ENCODE measurements at regions of chr17 and their contacts with region 1.

Region 1: DNA sequence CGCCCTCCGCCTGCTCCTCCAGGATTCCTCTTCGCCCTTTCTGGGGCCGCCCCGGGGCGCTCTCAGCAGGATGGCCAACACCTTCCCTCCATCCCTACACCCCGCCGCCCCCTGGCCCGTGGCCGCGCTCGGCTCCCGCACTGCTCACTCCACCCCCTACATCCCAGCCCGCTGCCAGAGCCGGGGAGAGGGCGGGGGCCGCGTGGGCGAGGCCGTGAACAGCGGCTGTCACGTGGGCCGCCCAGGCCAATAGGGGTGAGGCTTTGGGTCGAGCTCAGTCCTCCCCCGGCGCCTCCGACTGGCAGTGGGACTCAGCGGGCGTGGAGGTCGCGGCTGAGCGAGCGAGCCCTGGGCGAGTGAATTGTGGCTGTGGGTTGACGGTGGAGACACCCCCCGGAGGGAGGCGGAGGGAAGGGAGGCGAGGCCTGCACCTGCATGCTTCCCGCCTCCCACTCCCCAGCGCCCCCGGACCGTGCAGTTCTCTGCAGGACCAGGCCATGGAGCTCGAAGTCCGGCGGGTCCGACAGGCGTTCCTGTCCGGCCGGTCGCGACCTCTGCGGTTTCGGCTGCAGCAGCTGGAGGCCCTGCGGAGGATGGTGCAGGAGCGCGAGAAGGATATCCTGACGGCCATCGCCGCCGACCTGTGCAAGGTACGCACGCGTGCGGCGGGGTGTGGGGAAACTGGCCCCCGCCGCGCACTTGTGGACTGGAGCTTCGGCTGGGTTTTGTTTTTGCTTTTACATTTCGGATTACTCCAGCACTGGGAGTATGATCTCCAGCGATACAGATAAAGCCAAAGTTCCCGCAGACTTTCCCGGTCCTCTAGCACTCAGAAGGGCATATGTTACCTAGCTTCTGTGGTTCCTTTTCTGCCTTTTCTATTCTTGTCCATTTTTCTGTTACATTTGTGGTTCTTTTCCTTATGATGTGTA is at the start of gene ALDH3A2:
- DNase-seq: peak; percentile 93
- ATAC-seq: peak; percentile 96
- H3K4me3 Mint-ChIP-seq: peak within 1 kb of the TSS; percentile 93
- H3K27ac Mint-ChIP-seq: peak within 1 kb of the TSS; percentile 89
- H3K4me1 Mint-ChIP-seq: peaks cover 36% of the 10 kb centered on the region
- H3K27me3 Mint-ChIP-seq: peaks cover 8% of the 10 kb centered on the region
- total RNA-seq, gene ALDH3A2: 29.1 to 32.8 TPM

Region 2: DNA sequence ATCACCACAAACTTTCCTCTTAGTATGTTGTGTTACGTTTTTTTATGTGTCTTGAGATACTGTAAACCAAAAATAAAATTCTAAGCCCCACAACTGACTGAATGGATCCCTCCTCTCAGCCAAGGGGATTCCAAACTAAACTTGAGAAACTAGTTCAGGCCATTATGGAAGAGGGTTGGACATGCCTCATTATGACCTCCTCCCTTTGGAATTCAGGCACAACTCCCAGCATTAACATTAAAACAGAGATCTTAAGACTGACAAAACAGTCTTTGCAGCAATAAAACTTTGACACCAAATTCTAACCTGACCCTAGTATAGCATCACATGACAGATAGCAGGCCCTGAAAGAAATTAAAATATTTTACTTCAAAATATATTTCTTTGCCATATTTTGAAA is 166.2 kb before region 1 on chr17:
- POLR2A ChIA-PET with region 1: no interaction called
- DNase-seq: no peak
- ATAC-seq: no peak
- H3K4me3 Mint-ChIP-seq: no peak overlapping the region
- H3K27ac Mint-ChIP-seq: no peak overlapping the region
- H3K4me1 Mint-ChIP-seq: no peaks in the 10 kb centered on the region
- H3K27me3 Mint-ChIP-seq: no peaks in the 10 kb centered on the region

Region 3: DNA sequence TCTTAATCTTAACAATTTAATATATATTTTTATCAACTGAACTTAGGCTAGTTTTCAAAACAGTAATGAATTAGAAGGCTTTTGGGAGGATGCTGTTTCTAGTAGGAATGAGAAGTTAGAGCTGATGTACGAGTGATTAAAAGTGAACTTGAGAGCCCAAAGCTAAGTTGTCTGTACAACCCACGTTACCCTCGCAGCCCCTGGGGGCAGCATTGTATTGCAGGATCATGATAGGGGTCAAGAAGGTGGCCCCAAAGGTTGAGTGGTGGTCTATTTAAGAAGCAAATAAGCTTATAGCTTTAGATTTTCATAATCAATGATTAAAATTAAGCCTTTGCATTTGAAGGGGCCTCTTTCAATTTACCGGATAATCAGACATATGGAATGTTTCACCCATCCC is 33.8 kb before region 1 on chr17:
- POLR2A ChIA-PET with region 1: no interaction called
- DNase-seq: no peak
- ATAC-seq: no peak
- H3K4me3 Mint-ChIP-seq: no peak overlapping the region
- H3K27ac Mint-ChIP-seq: no peak overlapping the region
- H3K4me1 Mint-ChIP-seq: peaks cover 4% of the 10 kb centered on the region
- H3K27me3 Mint-ChIP-seq: peaks cover 8% of the 10 kb centered on the region

Region 4: DNA sequence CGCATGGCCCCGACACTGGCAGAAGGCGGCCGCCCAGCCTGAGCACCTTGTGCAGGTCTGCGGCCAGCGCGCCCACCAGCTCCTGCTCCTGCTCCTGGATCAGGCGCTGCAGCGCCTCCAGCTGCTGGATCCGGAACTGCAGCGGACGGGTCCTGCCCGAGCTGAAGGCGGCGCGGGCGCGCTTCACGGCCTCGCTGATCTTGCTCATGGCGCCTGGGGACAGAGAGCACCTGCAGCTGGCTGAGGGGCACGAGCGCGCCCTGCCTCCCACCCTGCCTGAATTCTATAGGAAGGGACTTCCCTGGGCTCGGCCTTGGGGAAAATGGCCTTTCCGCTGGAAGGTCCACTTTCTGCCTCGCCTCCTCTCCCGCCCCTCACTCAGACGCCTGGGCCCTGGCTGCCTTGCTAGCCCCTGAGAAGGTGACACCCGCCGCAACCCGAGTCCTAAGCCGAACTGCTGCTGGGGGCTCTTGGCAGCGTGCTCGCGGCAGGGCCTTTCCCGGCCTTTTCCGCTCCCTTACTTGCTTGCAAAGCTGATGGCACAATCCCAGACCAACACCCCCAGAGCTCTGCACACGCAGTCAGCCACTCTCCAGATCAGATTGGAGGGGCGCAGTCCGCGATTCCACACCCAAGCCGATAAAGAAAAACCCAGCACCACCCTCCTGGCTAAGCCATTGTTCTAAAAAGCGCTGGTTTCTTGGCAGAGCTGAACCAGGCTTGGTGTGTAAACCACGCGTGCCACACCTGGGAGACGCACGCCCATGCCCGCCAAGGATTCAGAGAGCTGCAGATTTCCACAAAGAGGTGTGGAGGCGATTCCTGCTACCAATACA is 96.4 kb after region 1 on chr17:
- POLR2A ChIA-PET with region 1: interaction called, 10 read pairs
- DNase-seq: peak; percentile 95
- ATAC-seq: peak; percentile 91
- H3K4me3 Mint-ChIP-seq: peak overlapping the region; percentile 78
- H3K27ac Mint-ChIP-seq: no peak overlapping the region
- H3K4me1 Mint-ChIP-seq: no peaks in the 10 kb centered on the region
- H3K27me3 Mint-ChIP-seq: peaks cover 4% of the 10 kb centered on the region